Activated B cell treated with CpG ODN at 0.5 μM for 24 hours (primary cell): ENCODE measurements at regions of chr7 and their contacts with region 1.

Region 1: DNA sequence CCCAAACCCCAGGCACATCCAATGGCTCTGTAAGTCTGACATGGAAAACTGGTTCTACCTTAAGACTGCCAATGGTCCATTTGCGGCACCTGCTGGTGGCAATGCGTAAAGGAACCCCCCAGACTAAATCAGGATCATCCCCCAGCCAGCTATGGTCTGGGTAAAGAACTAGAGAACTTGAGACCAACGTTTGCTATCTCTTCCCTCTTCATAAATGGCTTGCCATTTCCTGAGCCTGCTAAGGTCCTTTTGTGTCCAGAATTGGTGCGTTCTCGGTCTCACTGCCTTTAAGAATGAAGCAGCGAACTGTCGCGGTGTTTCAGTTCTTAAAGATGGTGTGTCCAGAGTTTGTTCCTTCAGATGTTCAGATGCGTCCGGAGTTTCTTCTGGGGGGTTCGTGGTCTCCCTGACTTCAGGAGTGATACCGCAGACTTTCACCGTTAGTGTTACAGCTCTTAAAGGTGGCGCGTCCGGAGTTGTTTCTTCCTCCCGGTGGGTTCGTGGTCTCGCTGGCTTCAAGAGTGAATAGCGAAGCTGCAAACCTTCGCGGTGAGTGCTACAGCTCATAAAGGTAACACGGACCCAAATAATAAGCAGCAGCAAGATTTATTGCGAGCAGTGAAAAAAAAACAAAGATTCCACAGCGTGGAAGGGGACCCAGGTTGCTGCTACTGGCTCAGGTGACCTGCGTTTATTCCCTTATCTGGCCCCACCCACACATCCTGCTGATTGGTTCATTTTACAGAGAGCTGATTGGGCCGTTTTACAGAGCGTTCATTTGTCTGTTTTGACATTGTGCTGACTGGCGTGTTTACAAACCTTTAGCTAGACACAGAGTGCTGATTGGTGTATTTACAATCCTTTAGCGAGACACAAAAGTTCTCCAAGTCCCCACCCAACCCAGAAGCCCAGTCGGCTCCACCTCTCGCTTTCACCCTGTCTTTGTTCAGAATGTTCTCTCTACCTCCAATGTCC is 95.4 kb downstream of the ELMO1 start:
- DNase-seq: peak; percentile 44
- ATAC-seq: peak; percentile 70
- H3K4me3 Mint-ChIP-seq: peak overlapping the region; percentile 96
- H3K27ac Mint-ChIP-seq: peak overlapping the region; percentile 86
- H3K4me1 Mint-ChIP-seq: peaks cover 59% of the 10 kb centered on the region
- H3K27me3 Mint-ChIP-seq: no peaks in the 10 kb centered on the region
- CTCF ChIP-seq: peak; percentile 46

Region 2: DNA sequence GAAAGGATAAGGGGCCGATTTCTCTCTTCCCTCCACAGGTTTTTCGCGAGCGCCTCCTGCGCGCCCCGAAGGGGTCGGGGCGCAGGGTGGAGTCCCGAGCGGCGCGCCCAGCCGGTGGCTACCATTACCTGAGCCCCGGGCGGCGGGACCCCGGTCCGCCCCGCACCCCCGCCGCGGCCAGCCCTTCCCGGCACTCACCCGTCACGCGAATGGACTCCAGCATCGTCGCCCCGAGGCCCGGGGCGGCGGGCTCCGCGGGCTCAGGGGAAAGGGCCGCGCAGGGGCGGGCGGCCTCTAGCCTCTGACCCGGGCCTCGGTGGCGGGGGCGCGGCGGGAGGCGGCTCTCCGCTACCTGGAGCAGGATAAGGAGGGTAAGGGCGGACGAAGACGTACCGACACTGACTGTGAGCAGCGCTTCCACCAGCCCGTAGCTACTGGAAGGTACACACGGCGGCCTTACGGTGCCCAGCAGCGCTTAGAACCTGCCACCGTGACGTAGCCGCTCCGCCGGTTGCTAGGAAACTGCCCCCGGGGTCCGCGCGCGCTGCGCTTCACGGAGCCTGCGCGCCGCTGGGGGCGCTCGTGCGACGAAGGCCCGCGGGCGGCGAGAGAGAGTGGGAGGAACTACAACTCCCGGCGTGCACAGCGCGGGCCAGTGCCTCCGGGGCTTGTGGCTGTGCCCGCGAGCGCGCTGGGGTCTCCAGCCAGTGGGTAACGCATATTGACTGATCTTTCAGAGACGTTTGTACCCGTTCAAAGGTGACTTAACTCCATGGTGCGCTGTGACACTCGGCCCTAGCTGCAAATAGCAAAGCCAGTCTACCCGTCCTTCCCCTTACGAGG is 986.3 kb before region 1 on chr7:
- CTCF ChIA-PET with region 1: no interaction called
- POLR2A ChIA-PET with region 1: no interaction called
- intact Hi-C with region 1: loop called (anchors 10 kb)
- DNase-seq: peak; percentile 93
- ATAC-seq: peak; percentile 98
- H3K4me3 Mint-ChIP-seq: peak overlapping the region; percentile 92
- H3K27ac Mint-ChIP-seq: peak overlapping the region; percentile 30
- H3K4me1 Mint-ChIP-seq: peaks cover 5% of the 10 kb centered on the region
- H3K27me3 Mint-ChIP-seq: peaks cover 6% of the 10 kb centered on the region
- CTCF ChIP-seq: no peak

Region 3: DNA sequence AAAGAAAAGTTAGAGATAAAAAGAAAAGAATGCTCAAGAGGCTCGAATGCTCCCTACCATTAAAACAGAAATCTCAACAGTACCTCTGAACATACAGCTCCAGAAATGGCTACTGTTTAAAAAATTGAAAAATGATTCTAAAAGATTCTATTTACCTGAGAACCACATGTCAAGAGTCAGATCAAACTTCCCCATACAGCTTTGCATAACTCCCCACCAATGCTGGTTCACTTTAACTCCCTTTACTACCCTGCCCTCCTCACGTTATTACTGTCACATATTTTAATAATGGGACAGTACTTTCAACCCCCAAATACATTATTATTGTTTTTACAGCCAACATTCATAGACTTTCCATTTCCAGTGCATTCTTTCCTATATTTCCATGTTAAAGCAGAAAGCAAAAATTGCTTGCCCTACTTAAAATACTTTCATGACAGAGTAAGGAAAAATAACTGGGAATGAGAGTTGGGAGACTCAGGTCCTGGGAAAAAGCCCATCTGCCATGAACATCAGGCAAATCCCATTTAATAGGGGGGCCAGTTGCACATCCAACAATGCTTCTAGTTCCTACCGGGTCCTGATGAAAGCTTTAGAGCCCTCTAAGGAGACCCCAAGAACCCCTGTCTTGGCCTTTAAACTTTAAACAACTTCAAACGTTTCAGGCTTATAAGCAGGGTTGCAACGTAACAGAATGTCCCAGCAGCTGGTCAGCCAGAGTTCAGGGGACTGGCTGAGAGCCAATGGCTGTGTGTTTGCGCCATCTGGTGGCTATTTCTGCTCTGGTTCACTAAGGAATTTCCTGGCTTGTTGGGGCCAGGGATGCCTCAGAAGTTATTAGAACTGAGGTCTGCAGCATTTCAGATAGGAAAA is 152.0 kb before region 1 on chr7:
- CTCF ChIA-PET with region 1: interaction called, 5 read pairs
- POLR2A ChIA-PET with region 1: no interaction called
- intact Hi-C with region 1: loop called (anchors 2 kb)
- DNase-seq: no peak
- ATAC-seq: peak; percentile 37
- H3K4me3 Mint-ChIP-seq: no peak overlapping the region
- H3K27ac Mint-ChIP-seq: peak overlapping the region; percentile 59
- H3K4me1 Mint-ChIP-seq: peaks cover 19% of the 10 kb centered on the region
- H3K27me3 Mint-ChIP-seq: no peaks in the 10 kb centered on the region
- CTCF ChIP-seq: no peak

Region 4: GRCh38 chr7:37284805-37285231 is 68.4 kb before region 1 on chr7:
- CTCF ChIA-PET with region 1: interaction called, 96 read pairs
- POLR2A ChIA-PET with region 1: interaction called, 5 read pairs
- intact Hi-C with region 1: loop called (anchors 1 kb)
- DNase-seq: peak; percentile 25
- ATAC-seq: no peak
- H3K4me3 Mint-ChIP-seq: no peak overlapping the region
- H3K27ac Mint-ChIP-seq: no peak overlapping the region
- H3K4me1 Mint-ChIP-seq: peaks cover 50% of the 10 kb centered on the region
- H3K27me3 Mint-ChIP-seq: no peaks in the 10 kb centered on the region
- CTCF ChIP-seq: peak; percentile 33

Region 5: DNA sequence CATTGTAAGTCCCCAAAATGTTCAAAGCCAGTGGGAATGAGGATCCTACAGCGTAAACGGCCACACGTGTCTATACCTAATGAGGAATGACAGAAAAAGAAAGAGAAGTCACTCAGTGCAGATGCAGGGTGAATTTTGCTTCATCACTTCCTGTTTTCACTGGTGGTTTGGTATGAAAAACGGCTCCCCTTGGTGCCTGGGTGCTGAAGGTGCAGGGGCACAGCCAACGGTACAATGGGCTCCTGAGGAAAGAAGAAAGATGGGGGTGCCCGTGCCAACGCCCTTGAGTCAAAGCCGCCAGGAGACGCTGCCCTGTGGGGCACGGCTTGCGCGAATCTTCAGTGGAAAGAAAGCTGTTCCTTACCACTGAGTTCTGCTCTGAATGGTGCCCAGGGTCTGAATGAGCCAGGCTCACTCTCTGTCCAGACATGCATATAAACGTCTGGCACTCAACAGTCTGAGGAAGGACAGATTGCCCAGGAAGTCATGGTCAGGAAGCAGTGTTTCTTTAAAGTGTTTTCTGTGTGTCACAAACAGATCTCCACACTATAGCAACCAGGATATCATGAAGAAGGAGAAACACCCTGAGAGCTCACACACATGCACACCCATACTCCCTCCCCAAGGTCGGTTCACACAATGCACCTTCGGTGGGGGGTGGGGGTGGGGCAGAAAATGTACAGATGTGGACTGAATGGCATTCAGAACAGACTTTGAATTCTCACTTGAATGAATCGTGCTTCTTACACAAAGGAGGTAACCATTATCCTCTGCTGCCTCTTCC is 10.4 kb before region 1 on chr7:
- CTCF ChIA-PET with region 1: interaction called, 26 read pairs
- POLR2A ChIA-PET with region 1: interaction called, 13 read pairs
- intact Hi-C with region 1: loop called (anchors 1 kb)
- DNase-seq: peak; percentile 59
- ATAC-seq: peak; percentile 86
- H3K4me3 Mint-ChIP-seq: peak overlapping the region; percentile 98
- H3K27ac Mint-ChIP-seq: peak overlapping the region; percentile 98
- H3K4me1 Mint-ChIP-seq: peaks cover 85% of the 10 kb centered on the region
- H3K27me3 Mint-ChIP-seq: no peaks in the 10 kb centered on the region
- CTCF ChIP-seq: no peak

Region 6: GRCh38 chr7:37448636-37449361 is 95.5 kb after region 1 on chr7 and contains the start of gene ELMO1:
- CTCF ChIA-PET with region 1: interaction called, 23 read pairs
- POLR2A ChIA-PET with region 1: interaction called, 61 read pairs
- intact Hi-C with region 1: loop called (anchors 1 kb)
- DNase-seq: peak; percentile 81
- ATAC-seq: peak; percentile 81
- H3K4me3 Mint-ChIP-seq: peak within 1 kb of the TSS; percentile 92
- H3K27ac Mint-ChIP-seq: peak within 1 kb of the TSS; percentile 99
- H3K4me1 Mint-ChIP-seq: peaks cover 47% of the 10 kb centered on the region
- H3K27me3 Mint-ChIP-seq: no peaks in the 10 kb centered on the region
- CTCF ChIP-seq: no peak
- total RNA-seq, gene ELMO1: 108 and 132 TPM in 2 replicates

Region 7: DNA sequence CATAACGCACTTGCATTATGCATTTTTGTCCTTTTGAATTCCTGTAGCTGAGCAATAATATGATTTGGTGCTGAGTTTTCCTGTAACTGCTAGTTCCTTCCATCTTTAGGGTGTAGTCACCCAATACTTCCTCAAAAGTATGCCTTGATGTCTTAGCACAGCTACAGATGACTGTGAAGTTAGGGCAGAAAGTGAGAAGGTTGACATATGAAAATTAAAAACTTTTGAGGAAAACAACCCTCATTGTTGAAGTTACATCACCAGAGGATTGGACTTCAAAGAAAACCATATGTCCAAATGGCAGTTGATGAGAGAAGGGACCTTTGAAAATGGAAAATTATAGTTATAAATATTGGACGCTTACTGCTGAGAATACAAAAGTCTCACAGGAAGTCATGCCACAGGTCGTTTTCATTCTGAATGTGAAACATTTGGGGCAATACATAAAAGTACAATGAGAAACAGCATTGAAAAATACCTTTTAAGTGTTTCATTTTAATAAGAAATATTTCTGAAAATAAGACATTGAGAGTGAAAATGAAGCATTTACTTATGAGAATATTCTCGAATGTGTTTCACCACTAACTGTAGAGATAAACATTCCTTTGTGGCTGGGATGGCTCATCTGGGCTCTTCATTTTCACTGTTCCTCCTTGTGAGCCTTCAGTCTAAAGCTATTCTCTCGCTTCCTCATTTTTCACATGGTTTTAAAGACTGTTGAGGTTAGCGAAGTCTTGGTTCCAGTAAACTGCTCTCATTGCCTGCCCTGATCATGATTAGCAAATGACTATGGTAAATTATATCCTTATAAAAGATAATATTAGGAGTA is 433.7 kb after region 1 on chr7:
- CTCF ChIA-PET with region 1: no interaction called
- POLR2A ChIA-PET with region 1: no interaction called
- intact Hi-C with region 1: loop called (anchors 2 kb)
- DNase-seq: no peak
- ATAC-seq: peak; percentile 89
- H3K4me3 Mint-ChIP-seq: peak overlapping the region; percentile 74
- H3K27ac Mint-ChIP-seq: peak overlapping the region; percentile 99
- H3K4me1 Mint-ChIP-seq: peaks cover 41% of the 10 kb centered on the region
- H3K27me3 Mint-ChIP-seq: no peaks in the 10 kb centered on the region
- CTCF ChIP-seq: no peak